CD14-positive monocyte (primary cell): ENCODE measurements at regions of chr14 and their contacts with region 1.

Region 1: GRCh38 chr14:20454516-20455354 is at the starts of genes APEX1 and OSGEP:
- DNase-seq: peak; percentile 98 to 99 (median 99)
- H3K4me3 ChIP-seq: peak within 1 kb of the TSS; percentile 55 to 84 (median 79)
- H3K4me3 Mint-ChIP-seq: no peak within 1 kb of the TSS
- H3K27ac ChIP-seq: peak within 1 kb of the TSS; percentile 85 to 94
- H3K27ac Mint-ChIP-seq: peak within 1 kb of the TSS in 1 of 7 donors; percentile 11
- H3K4me1 ChIP-seq: peaks cover 52 to 58% of the 10 kb centered on the region in 2 donors
- H3K4me1 Mint-ChIP-seq: peaks cover 5% of the 10 kb centered on the region
- H3K27me3 ChIP-seq: no peaks in the 10 kb centered on the region
- H3K27me3 Mint-ChIP-seq: peaks cover 0 to 1% (median 0%) of the 10 kb centered on the region in 3 donors
- CTCF ChIP-seq: no peak
- polyA plus RNA-seq, gene APEX1: 69.7 to 208 (median 85.4) TPM
- polyA plus RNA-seq, gene OSGEP: 34.7 to 112 (median 40.0) TPM

Region 2: DNA sequence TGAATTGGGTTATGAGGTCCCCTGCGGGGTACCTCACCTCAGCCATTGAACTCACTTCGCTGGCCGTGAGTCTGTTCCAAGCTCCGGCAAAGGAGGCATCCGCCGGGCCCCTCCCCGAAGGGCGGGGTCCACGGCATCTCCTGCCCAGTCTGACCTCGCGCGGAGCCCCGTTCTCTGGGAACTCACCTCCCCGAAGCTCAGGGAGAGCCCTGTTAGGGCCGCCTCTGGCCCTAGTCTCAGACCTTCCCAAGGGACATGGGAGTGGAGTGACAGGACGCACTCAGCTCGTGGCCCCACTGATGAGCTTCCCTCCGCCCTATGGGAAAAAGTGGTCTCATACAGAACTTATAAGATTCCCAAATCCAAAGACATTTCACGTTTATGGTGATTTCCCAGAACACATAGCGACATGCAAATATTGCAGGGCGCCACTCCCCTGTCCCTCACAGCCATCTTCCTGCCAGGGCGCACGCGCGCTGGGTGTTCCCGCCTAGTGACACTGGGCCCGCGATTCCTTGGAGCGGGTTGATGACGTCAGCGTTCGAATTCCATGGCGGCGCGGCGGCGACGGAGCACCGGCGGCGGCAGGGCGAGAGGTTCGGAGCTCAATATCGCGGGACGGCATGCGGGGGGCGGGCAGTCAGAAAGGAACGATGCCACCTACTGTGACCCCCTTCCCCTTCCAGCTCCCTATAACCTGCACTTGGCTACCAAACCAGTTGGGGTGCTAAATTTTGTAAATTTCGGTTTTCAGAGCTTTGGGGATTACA is 111.5 kb before region 1 on chr14 and contains the start of gene PARP2:
- intact Hi-C with region 1: loop called (anchors 10 kb)
- DNase-seq: peak; percentile 97 to 99 (median 98)
- H3K4me3 ChIP-seq: peak within 1 kb of the TSS; percentile 71 to 89 (median 80)
- H3K4me3 Mint-ChIP-seq: peak within 1 kb of the TSS; percentile 95 to 96
- H3K27ac ChIP-seq: peak within 1 kb of the TSS; percentile 83 to 93
- H3K27ac Mint-ChIP-seq: peak within 1 kb of the TSS; percentile 93 to 98 (median 96)
- H3K4me1 ChIP-seq: peaks cover 11 to 14% of the 10 kb centered on the region in 2 donors
- H3K4me1 Mint-ChIP-seq: peaks cover 9% of the 10 kb centered on the region
- H3K27me3 ChIP-seq: no peaks in the 10 kb centered on the region
- H3K27me3 Mint-ChIP-seq: peaks cover 0 to 6% (median 3%) of the 10 kb centered on the region in 3 donors
- CTCF ChIP-seq: no peak
- polyA plus RNA-seq, gene PARP2: 1.8 to 7.3 (median 3.9) TPM

Region 3: DNA sequence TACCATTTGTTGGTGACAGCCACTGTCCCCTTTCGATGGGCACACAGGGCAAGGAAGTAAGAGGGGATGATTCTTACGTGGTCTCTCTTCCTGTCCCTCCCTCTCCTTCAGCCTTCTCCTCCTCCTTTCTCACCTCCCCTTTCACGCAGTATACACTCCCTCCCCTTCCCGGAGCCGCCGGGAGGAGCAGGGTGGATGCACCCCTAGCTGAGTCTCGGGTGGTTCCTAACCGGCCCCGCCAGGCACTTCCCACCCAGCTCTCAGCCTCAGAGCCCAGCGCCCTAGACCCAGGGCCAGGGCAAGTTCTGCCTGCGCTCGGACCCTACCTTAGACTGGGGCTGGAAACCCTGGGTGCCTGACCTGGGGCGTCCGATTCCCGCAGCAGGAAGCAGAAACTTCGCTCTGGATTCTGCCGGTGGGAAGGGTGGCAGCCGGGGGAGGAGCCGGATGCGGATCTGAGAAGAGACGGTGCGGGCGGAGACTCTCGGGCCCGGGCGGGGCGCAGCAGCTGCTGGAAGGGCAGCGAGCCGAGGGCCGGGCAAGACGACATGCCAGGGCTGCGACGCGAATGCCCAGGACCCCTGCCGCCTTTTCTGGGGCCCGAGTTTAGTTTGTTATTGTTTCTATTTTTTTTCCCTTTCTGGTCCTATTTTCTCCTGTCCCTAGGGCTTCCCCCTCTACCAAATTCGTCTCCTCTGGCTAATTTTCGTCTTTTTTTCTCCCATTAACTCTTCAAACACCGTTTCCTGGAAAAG is 41.5 kb before region 1 on chr14 and contains the start of gene TEP1:
- intact Hi-C with region 1: loop called in 1 of 2 experiments (anchors 5 kb)
- DNase-seq: peak; percentile 45 to 61 (median 52)
- H3K4me3 ChIP-seq: peak within 1 kb of the TSS; percentile 82 to 95 (median 86)
- H3K4me3 Mint-ChIP-seq: peak within 1 kb of the TSS; percentile 97 to 98
- H3K27ac ChIP-seq: peak within 1 kb of the TSS; percentile 73 to 82
- H3K27ac Mint-ChIP-seq: peak within 1 kb of the TSS; percentile 83 to 97 (median 92)
- H3K4me1 ChIP-seq: peaks cover 29 to 35% of the 10 kb centered on the region in 2 donors
- H3K4me1 Mint-ChIP-seq: peaks cover 50% of the 10 kb centered on the region
- H3K27me3 ChIP-seq: no peaks in the 10 kb centered on the region
- H3K27me3 Mint-ChIP-seq: peaks cover 0 to 1% (median 0%) of the 10 kb centered on the region in 3 donors
- CTCF ChIP-seq: no peak
- polyA plus RNA-seq, gene TEP1: 2.3 to 78.9 (median 7.1) TPM

Region 4: GRCh38 chr14:21263656-21264411 is 809.1 kb after region 1 on chr14:
- intact Hi-C with region 1: loop called in 1 of 2 experiments (anchors 5 kb)
- DNase-seq: peak; percentile 33 to 88 (median 68)
- H3K4me3 ChIP-seq: peak overlapping the region in 1 of 3 experiments; percentile 2
- H3K4me3 Mint-ChIP-seq: peak overlapping the region; percentile 24 to 46
- H3K27ac ChIP-seq: peak overlapping the region; percentile 28 to 65
- H3K27ac Mint-ChIP-seq: peak overlapping the region; percentile 83 to 100 (median 92)
- H3K4me1 ChIP-seq: peaks cover 48 to 57% of the 10 kb centered on the region in 2 donors
- H3K4me1 Mint-ChIP-seq: peaks cover 65% of the 10 kb centered on the region
- H3K27me3 ChIP-seq: no peaks in the 10 kb centered on the region
- H3K27me3 Mint-ChIP-seq: no peaks in the 10 kb centered on the region
- CTCF ChIP-seq: no peak